Activated B cell treated with CpG ODN at 0.5 μM for 24 hours (primary cell): ENCODE measurements at regions of chr14 and their contacts with region 1.

Region 1: DNA sequence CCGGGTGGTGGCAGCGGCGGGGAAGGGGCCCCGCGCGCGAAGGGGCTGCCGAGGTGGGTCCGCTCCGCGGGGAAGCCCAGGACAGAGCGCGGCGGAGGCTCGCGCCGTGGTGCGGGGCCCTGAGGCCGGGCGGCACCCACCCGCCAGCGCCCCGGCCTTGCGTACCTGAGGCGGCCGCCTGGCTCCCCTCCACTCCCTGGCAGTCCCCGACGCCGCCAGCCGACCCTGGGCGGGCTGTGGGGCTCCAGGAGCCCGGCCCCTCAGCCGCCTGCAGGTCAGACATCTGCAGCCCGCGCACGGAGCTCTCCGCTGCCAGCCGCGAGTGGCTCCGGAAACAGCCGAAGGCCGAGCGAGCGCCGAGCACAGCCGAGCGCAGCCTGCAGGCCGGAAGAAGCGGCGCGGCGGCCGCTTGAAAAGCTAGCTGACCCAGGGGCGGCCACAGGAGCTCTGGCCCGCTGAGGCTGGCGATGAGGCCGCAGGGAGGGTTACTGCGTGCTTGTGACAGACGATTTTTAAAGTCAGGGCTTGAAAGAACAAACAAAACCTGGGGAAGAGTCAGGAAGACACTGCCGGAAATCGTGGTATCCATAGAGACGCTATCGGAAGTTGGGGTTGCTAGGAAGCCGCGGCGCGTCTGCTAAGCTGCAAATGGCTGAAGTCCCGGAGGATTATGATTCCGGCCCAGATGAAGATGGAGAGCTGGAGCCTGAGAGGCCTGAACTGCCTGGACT is at the starts of genes SAMD15 and TMED8:
- DNase-seq: peak; percentile 85
- ATAC-seq: peak; percentile 89
- H3K4me3 Mint-ChIP-seq: peak within 1 kb of the TSS; percentile 93
- H3K27ac Mint-ChIP-seq: peak within 1 kb of the TSS; percentile 93
- H3K4me1 Mint-ChIP-seq: peaks cover 39% of the 10 kb centered on the region
- H3K27me3 Mint-ChIP-seq: no peaks in the 10 kb centered on the region
- CTCF ChIP-seq: no peak
- total RNA-seq, gene SAMD15: 0.71 and 1.00 TPM in 2 replicates
- total RNA-seq, gene TMED8: 29.9 and 31.3 TPM in 2 replicates

Region 2: GRCh38 chr14:76812211-76813044 is 564.5 kb before region 1 on chr14 and contains the start of gene ANGEL1:
- CTCF ChIA-PET with region 1: no interaction called
- POLR2A ChIA-PET with region 1: no interaction called
- intact Hi-C with region 1: loop called (anchors 5 kb)
- DNase-seq: peak; percentile 97
- ATAC-seq: peak; percentile 95
- H3K4me3 Mint-ChIP-seq: peak within 1 kb of the TSS; percentile 95
- H3K27ac Mint-ChIP-seq: peak within 1 kb of the TSS; percentile 91
- H3K4me1 Mint-ChIP-seq: peaks cover 25% of the 10 kb centered on the region
- H3K27me3 Mint-ChIP-seq: no peaks in the 10 kb centered on the region
- CTCF ChIP-seq: no peak
- total RNA-seq, gene ANGEL1: 14.9 and 17.9 TPM in 2 replicates

Region 3: DNA sequence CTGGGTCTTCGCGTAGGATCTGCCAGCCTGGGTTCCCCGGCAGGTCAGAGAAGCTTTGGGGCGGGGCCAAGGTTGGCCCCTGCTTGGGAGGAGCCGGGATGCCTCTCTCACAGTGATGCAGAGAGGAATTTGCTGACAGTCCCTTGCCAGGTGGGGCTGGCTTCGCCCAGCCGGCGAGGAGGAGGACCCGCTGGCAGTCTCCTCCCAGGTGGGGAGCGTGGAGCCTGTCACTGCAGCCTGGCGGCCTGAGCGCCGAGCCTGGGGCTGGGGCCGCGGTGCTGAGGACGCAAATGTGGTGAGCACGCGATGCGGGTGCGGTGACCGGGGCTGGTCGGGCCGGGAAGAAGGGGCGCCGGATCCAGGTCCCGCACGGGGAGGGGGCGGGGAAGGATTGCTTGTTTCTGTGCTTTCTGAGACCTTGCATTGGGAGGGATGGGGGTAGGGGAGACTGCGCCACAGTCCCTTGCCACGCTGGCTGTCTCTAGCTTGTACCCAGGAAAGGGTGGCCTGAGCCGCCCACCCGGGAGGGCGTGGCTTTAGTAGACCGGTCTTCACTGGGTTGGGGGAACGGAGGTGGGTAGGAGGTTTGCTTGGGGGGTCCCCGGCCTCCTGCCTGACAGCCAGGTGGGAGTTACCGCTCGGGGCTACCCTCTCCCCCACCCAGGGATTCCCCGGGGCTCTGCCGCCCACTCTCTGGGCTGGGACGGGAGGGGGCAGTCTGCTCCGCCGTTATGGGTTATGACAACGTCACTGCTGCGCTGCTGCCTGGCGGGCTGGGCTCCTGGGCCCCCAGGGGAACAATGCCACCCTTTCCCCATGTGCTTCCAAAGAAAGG is 195.1 kb before region 1 on chr14 and contains the start of gene TMEM63C:
- CTCF ChIA-PET with region 1: no interaction called
- POLR2A ChIA-PET with region 1: no interaction called
- intact Hi-C with region 1: loop called (anchors 5 kb)
- DNase-seq: peak; percentile 44
- ATAC-seq: peak; percentile 89
- H3K4me3 Mint-ChIP-seq: peak within 1 kb of the TSS; percentile 80
- H3K27ac Mint-ChIP-seq: no peak within 1 kb of the TSS
- H3K4me1 Mint-ChIP-seq: peaks cover 20% of the 10 kb centered on the region
- H3K27me3 Mint-ChIP-seq: peaks cover 8% of the 10 kb centered on the region
- CTCF ChIP-seq: no peak
- total RNA-seq, gene TMEM63C: 0.15 and 1.5 TPM in 2 replicates

Region 4: GRCh38 chr14:77347751-77348150 is 29.2 kb before region 1 on chr14:
- CTCF ChIA-PET with region 1: interaction called, 3 read pairs
- POLR2A ChIA-PET with region 1: interaction called, 5 read pairs
- intact Hi-C with region 1: loop called (anchors 1 kb)
- DNase-seq: no peak
- ATAC-seq: peak; percentile 84
- H3K4me3 Mint-ChIP-seq: no peak overlapping the region
- H3K27ac Mint-ChIP-seq: peak overlapping the region; percentile 79
- H3K4me1 Mint-ChIP-seq: peaks cover 25% of the 10 kb centered on the region
- H3K27me3 Mint-ChIP-seq: no peaks in the 10 kb centered on the region
- CTCF ChIP-seq: no peak

Region 5: DNA sequence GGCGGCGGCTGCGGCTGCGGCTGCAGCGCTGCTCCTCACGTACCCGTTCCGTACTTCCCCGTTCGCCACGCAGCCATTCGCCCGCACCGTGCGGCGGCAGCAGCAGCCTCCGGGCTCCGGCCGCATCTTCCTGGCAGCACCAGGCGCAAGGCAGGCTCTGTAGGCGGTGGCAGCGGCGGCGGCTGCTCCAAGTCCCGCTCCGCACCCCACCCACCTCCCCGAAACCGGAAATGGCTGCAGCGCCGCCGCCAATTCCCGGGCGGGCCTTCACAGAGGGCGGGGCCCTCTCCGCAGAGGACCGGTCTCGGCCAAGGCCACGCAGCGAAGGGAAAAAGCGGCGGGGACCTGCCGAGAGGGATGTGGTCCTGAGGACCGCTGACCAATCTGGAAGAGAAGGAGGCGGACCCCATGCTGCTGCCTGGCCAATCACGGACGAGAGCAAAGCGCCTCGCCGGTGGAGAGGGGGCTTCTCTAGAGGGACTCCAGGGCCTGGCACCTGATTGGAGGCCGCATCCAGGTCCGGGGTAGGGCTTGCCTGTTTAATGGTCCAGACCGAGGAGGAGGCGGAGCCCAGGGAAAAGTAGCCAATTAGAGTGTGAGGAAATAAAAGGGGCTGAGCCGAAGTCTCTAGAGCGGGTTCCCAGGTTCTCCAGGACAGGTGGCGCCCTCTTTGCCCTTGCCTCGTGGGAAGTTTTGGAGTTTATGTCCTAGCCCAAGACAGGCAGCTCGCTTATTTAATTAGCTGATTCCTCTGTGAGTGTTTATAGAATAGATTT is 239.7 kb after region 1 on chr14 and contains the start of gene SPTLC2:
- CTCF ChIA-PET with region 1: no interaction called
- POLR2A ChIA-PET with region 1: no interaction called
- intact Hi-C with region 1: loop called (anchors 2 kb)
- DNase-seq: peak; percentile 84
- ATAC-seq: peak; percentile 94
- H3K4me3 Mint-ChIP-seq: peak within 1 kb of the TSS; percentile 95
- H3K27ac Mint-ChIP-seq: peak within 1 kb of the TSS; percentile 86
- H3K4me1 Mint-ChIP-seq: peaks cover 42% of the 10 kb centered on the region
- H3K27me3 Mint-ChIP-seq: no peaks in the 10 kb centered on the region
- CTCF ChIP-seq: no peak
- total RNA-seq, gene SPTLC2: 34.1 and 43.8 TPM in 2 replicates